Activated CD4-positive, alpha-beta memory T cell treated with anti-CD3 and anti-CD28 coated beads for 36 hours (primary cell): ENCODE measurements at regions of chr12 and their contacts with region 1.

Region 1: DNA sequence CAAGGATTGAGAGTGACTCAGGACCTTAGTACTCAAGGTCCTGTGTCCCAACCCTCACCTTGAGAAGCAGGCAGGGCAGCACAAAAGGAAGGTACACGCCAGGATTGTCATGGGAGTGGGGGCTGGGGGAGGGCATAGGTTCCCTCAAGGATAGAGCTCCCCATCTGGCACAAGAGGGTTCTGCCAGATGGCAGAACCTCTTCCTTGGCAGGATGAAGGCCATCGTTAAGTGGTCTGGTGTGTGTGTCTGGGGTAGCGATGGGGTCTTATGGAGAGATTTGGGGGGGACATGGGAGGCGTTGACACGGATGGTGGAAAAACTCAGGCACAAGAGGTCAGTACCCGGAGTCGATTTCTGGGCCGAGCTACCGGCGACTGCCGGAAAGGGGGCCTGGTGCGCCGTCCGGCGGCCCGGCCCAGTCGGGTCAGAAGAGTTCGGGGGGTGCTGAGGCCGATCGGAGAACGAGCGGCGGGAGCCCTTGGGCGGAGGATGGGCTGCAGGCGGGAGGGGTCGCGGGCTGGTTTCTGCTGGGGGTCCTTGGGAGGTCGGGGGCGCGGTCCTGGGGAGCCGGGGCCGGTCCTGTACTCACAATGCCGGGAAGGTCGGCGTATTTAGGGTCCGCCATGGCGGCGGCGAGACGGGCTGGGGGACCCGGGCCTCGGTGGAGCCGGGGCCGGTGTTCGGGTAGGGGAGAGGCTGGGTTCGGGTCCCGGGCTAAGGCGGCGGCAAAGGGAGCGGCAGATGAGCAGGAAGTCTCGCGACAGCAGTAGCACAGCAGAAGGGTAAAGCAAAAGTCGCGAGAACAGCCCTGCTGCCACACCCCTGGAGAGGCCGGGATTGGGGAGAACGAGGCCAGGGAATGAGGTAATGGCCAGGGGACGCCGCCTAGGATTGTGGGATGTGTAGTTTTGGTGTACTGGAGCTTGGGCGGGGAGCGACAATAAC is at the start of gene DCTN2:
- DNase-seq: peak; percentile 98
- H3K4me3 Mint-ChIP-seq: peak within 1 kb of the TSS; percentile 97
- H3K27ac Mint-ChIP-seq: peak within 1 kb of the TSS; percentile 87
- H3K4me1 Mint-ChIP-seq: peaks cover 49% of the 10 kb centered on the region
- H3K27me3 Mint-ChIP-seq: peaks cover 5% of the 10 kb centered on the region
- total RNA-seq, gene DCTN2: 81.0 to 85.2 TPM

Region 2: DNA sequence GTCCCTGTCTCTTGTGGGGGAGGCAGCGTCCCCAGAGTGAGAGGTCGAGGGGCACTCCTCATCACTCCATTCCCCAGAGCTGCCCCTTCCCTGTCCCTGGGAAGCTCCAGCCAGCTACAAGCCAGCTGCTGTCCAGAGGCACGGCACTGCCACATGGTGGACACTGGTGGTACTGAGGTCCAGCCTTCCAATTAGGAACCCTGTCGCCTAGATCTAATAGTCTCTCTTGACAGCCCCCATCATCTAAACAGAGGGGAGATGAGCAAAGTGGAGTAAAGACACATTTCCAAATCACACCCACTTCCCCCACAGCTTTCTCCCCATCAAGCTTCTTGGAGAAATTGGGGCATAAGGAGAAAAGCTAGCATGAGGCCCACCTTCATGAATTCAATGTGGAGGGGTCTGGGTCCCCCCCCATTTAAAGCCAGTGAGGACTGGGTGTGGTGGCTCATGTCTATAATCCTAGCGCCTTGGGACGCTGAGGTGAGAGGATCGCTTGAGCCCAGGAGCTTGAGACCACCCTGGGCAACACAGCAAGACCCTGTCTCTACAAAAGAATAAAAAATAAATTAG is 93.7 kb before region 1 on chr12:
- CTCF ChIA-PET with region 1: no interaction called
- POLR2A ChIA-PET with region 1: no interaction called
- intact Hi-C with region 1: no loop called
- DNase-seq: peak; percentile 77
- H3K4me3 Mint-ChIP-seq: no peak overlapping the region
- H3K27ac Mint-ChIP-seq: peak overlapping the region; percentile 53
- H3K4me1 Mint-ChIP-seq: peaks cover 13% of the 10 kb centered on the region
- H3K27me3 Mint-ChIP-seq: peaks cover 1% of the 10 kb centered on the region

Region 3: GRCh38 chr12:57476162-57476992 is 70.3 kb before region 1 on chr12:
- CTCF ChIA-PET with region 1: no interaction called
- POLR2A ChIA-PET with region 1: no interaction called
- intact Hi-C with region 1: loop called (anchors 2 kb)
- DNase-seq: peak; percentile 94
- H3K4me3 Mint-ChIP-seq: peak overlapping the region; percentile 87
- H3K27ac Mint-ChIP-seq: peak overlapping the region; percentile 99
- H3K4me1 Mint-ChIP-seq: peaks cover 60% of the 10 kb centered on the region
- H3K27me3 Mint-ChIP-seq: no peaks in the 10 kb centered on the region

Region 4: GRCh38 chr12:57487597-57488401 is 58.9 kb before region 1 on chr12 and contains the start of gene MARS1:
- CTCF ChIA-PET with region 1: no interaction called
- POLR2A ChIA-PET with region 1: no interaction called
- intact Hi-C with region 1: loop called (anchors 2 kb)
- DNase-seq: peak; percentile 96
- H3K4me3 Mint-ChIP-seq: peak within 1 kb of the TSS; percentile 97
- H3K27ac Mint-ChIP-seq: peak within 1 kb of the TSS; percentile 94
- H3K4me1 Mint-ChIP-seq: peaks cover 40% of the 10 kb centered on the region
- H3K27me3 Mint-ChIP-seq: no peaks in the 10 kb centered on the region
- total RNA-seq, gene MARS1: 354 to 364 TPM

Region 5: DNA sequence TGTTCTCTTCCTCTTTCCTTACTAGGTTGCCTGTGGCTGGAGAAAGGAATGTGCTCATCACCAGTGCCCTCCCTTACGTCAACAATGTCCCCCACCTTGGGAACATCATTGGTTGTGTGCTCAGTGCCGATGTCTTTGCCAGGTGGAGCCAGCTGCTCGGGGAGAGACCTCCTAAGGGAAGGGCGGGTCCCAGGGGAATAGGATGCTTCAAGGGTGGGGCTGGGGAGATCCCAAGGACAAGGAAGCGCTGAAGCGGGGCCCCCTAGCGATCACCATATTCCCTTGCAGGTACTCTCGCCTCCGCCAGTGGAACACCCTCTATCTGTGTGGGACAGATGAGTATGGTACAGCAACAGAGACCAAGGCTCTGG is 48.6 kb before region 1 on chr12:
- CTCF ChIA-PET with region 1: no interaction called
- POLR2A ChIA-PET with region 1: no interaction called
- intact Hi-C with region 1: no loop called
- DNase-seq: no peak
- H3K4me3 Mint-ChIP-seq: no peak overlapping the region
- H3K27ac Mint-ChIP-seq: no peak overlapping the region
- H3K4me1 Mint-ChIP-seq: peaks cover 7% of the 10 kb centered on the region
- H3K27me3 Mint-ChIP-seq: no peaks in the 10 kb centered on the region

Region 6: GRCh38 chr12:57590536-57591479 is 44.1 kb after region 1 on chr12 and contains the start of gene PIP4K2C:
- CTCF ChIA-PET with region 1: interaction called, 3 read pairs
- POLR2A ChIA-PET with region 1: interaction called, 3 read pairs
- intact Hi-C with region 1: loop called (anchors 2 kb)
- DNase-seq: peak; percentile 89
- H3K4me3 Mint-ChIP-seq: peak within 1 kb of the TSS; percentile 84
- H3K27ac Mint-ChIP-seq: peak within 1 kb of the TSS; percentile 70
- H3K4me1 Mint-ChIP-seq: peaks cover 21% of the 10 kb centered on the region
- H3K27me3 Mint-ChIP-seq: no peaks in the 10 kb centered on the region
- total RNA-seq, gene PIP4K2C: 17.8 to 20.6 TPM

Region 7: GRCh38 chr12:57693659-57694458 is 147.1 kb after region 1 on chr12 and contains the start of gene OS9:
- CTCF ChIA-PET with region 1: no interaction called
- POLR2A ChIA-PET with region 1: no interaction called
- intact Hi-C with region 1: loop called (anchors 2 kb)
- DNase-seq: peak; percentile 97
- H3K4me3 Mint-ChIP-seq: no peak within 1 kb of the TSS
- H3K27ac Mint-ChIP-seq: no peak within 1 kb of the TSS
- H3K4me1 Mint-ChIP-seq: no peaks in the 10 kb centered on the region
- H3K27me3 Mint-ChIP-seq: peaks cover under 1% of the 10 kb centered on the region
- total RNA-seq, gene OS9: 73.4 to 74.8 TPM